ENCODE measurements at regions of chrX and their contacts with region 1.

Region 1: GRCh38 chrX:49053223-49054072 is 5.4 kb upstream of the CCDC120 start:
- DNase-seq: no peak
- ATAC-seq: peak; percentile 88
- H3K4me3 ChIP-seq: peak overlapping the region; percentile 52 to 62
- H3K27ac ChIP-seq: peak overlapping the region; percentile 72
- H3K4me1 ChIP-seq: peaks cover 3% of the 10 kb centered on the region; the same call in 1 of the 2 replicates
- H3K27me3 ChIP-seq: no peaks in the 10 kb centered on the region
- CTCF ChIP-seq: no peak

Region 2: GRCh38 chrX:48703642-48704481 is 349.6 kb before region 1 on chrX:
- CTCF ChIA-PET with region 1: no interaction called
- POLR2A ChIA-PET with region 1: interaction called, 22 read pairs
- in situ Hi-C with region 1: no loop called
- intact Hi-C with region 1: no loop called
- DNase-seq: no peak
- ATAC-seq: 0 out of 2 replicates have a peak, but pooled peaks have one; percentile 14
- H3K4me3 ChIP-seq: no peak overlapping the region
- H3K27ac ChIP-seq: no peak overlapping the region
- H3K4me1 ChIP-seq: 0 out of 2 replicates have a peak, but pooled peaks cover 4% of the 10 kb centered on the region
- H3K27me3 ChIP-seq: no peaks in the 10 kb centered on the region
- CTCF ChIP-seq: no peak

Region 3: GRCh38 chrX:49073601-49074571 is 20.4 kb after region 1 on chrX and contains the start of gene PRAF2:
- CTCF ChIA-PET with region 1: no interaction called
- POLR2A ChIA-PET with region 1: no interaction called
- in situ Hi-C with region 1: no loop called
- intact Hi-C with region 1: no loop called
- DNase-seq: peak; percentile 64
- ATAC-seq: peak; percentile 95
- H3K4me3 ChIP-seq: peak within 1 kb of the TSS; percentile 71 to 87
- H3K27ac ChIP-seq: peak within 1 kb of the TSS; percentile 85
- H3K4me1 ChIP-seq: no peaks in the 10 kb centered on the region; the same call in 1 of the 2 replicates
- H3K27me3 ChIP-seq: no peaks in the 10 kb centered on the region
- CTCF ChIP-seq: no peak
- total RNA-seq, gene PRAF2: 36.3 TPM

Region 4: DNA sequence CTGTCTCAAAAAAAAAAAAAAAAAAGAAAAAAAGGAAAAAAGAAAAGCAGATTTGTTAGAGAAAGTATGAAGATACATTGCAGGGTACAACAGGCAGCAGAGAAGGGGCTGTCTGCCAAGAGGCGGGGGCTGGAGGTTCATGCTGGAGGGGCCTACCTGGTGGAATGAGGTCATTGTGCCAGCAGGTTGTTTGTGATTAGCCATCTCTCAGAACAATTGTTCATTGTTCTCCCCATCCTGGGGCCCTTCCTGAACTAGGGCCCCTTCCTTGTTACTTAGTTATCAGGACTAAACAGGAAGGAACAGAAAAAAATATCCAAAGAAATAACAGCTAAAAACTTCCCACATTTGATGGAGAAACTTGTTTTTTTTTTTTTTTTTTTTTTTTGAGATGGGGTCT is 84.0 kb after region 1 on chrX:
- CTCF ChIA-PET with region 1: no interaction called
- POLR2A ChIA-PET with region 1: interaction called, 10 read pairs
- in situ Hi-C with region 1: no loop called
- intact Hi-C with region 1: no loop called
- DNase-seq: no peak
- ATAC-seq: no peak
- H3K4me3 ChIP-seq: no peak overlapping the region
- H3K27ac ChIP-seq: no peak overlapping the region
- H3K4me1 ChIP-seq: no peaks in the 10 kb centered on the region
- H3K27me3 ChIP-seq: no peaks in the 10 kb centered on the region
- CTCF ChIP-seq: no peak

Measured in Panc1 (cell line).